ENCODE measurements at regions of chr20 and their contacts with region 1.

Region 1: DNA sequence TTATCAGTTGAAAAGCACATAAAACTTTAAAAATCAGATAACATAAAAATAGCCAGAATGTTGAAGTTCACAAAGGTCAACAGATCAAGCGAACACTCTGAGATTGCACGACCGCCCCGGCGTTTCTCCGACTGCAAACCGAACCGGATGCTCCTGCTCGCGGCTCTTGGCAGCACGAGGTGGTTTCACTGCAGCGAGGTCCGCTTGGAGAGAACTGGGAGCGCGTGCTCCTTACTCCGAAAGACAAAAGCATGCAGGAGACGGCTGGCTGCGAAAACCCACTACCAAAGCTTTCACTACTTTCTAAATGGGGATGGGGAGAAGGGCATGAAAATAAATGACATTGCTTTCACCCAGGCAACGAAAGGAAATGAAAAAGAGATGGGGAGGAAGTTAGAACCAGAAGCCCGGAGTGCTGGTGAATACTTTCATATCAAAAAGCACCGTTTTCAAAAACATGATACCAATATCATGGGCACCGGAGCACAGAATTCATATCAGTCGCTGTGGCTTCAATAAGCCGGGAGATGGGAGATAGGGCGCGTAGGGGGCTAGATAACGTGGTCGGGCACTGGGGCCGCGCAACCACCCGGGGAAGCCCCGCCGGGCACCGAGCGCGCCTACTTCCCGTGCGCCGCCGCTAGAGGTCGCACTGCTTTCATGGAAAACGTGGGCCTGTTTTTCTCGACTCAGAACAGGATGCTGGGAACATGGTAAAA is 8.3 kb upstream of the ANKRD60 start:
- DNase-seq: peak; percentile 73
- ATAC-seq: peak; percentile 90 to 93

Region 2: GRCh38 chr20:58447511-58448391 is 211.0 kb after region 1 on chr20:
- intact Hi-C with region 1: loop called (anchors 5 to 10 kb)
- DNase-seq: no peak
- ATAC-seq: peak; percentile 30 to 68

Region 3: GRCh38 chr20:58839474-58839874 is 602.7 kb after region 1 on chr20:
- intact Hi-C with region 1: loop called in 1 of 2 experiments (anchors 5 kb)
- DNase-seq: peak; percentile 53
- ATAC-seq: peak; percentile 73 to 77

Measured in left cardiac atrium (tissue), 4 donors.